ENCODE measurements at regions of chr12 and their contacts with region 1.

Region 1: DNA sequence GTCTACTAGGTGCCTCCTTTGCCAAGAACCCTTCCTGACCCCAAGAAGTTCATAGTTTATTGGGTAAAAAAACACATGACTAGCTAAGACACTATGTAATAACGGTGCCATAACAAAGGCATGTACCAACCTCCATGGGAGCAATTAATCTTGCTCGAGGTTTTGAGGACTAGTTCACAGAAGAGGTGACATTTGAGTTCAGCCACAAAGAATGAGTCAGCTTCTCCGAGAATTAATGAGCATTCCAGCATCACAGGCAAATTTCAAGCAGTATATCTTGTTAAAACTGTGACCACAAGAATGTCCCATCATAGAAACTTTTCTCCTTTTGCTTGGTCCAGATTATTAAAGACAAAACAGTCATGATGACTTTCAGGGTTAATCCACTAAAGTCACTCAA is 113.0 kb upstream of the RAP1B start:
- DNase-seq: peak; percentile 27
- ATAC-seq: peak; percentile 78
- H3K4me3 Mint-ChIP-seq: peak overlapping the region; percentile 53
- H3K27ac Mint-ChIP-seq: peak overlapping the region; percentile 86
- H3K4me1 Mint-ChIP-seq: peaks cover 37% of the 10 kb centered on the region
- H3K27me3 Mint-ChIP-seq: peaks cover 2% of the 10 kb centered on the region

Region 2: DNA sequence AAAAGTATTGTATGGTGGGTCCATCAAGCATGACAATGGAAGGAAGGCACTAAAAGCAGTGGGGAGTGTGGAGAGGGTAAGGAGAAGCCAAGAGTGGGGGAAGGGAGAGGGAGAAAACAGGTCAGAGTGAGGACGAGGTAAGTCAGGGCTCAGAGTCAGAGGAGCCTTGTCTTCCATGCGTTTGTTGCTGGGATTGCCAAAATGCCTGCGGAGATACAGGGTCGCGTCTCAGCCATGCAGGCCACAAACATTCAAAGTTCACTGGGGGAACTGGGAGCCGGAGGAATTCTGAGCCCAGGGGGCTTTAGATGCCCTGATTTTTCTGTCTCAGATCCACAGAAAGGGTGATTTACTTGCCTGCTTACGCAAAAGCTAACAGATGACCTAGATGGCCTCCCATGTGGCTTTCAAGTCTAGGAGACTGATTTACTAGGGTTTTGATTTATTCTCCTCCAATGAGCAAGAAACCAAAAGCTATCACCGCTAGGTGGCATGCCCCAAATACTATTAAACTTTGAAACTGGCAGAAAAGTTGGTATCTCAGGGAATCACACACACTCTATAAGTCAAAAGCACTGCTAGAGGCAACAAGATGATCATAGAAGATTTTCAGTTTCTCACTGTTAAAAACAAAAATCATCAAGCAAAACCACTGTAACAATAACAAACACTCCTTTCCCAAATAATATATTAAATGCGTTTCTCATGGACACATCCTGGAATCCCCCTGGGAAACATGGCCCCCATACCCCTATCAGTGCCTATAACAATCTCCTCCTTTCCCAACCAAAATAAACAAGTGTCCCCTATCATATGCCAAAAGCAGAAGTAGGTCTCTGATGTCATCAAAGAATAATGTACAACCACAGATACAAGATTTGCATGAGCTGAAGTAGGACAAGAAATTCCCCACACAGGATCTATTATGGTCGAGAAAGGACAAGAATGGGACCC is 138.9 kb before region 1 on chr12:
- CTCF ChIA-PET with region 1: interaction called, 3 read pairs
- POLR2A ChIA-PET with region 1: no interaction called
- intact Hi-C with region 1: loop called (anchors 2 kb)
- DNase-seq: peak; percentile 78
- ATAC-seq: peak; percentile 80
- H3K4me3 Mint-ChIP-seq: no peak overlapping the region
- H3K27ac Mint-ChIP-seq: peak overlapping the region; percentile 13
- H3K4me1 Mint-ChIP-seq: peaks cover 29% of the 10 kb centered on the region
- H3K27me3 Mint-ChIP-seq: no peaks in the 10 kb centered on the region

Region 3: DNA sequence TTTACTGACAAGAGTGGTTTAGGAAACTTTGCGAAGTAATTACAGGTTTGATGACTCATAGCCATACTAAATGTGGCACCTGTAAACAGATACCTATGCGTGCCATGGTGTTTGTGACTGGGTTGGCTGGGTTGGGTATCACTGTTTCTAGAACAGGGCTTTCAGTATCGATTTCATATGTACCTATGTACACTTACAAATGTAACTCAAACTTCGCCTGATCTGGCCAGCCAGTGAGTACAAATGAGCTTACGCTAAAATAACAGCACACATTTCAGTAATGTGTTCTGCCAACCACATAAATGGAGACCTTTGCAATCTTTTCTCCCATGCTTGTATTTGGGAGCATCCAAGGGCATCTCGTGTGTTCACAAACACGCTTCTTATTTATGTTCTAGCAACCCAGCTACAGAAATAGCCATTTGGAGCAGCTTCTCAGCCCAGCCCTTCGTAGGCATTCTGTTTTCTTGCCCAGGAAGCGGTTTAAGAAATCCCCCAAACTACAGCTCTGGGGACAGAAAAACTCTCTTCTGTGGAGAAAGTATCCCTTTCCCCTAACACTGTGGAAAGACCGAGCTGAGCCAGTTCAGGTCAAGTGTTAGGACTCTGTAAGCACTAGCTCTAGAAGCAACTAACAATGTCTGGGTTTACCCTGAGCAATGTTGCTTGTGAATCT is 123.3 kb before region 1 on chr12:
- CTCF ChIA-PET with region 1: no interaction called
- POLR2A ChIA-PET with region 1: interaction called, 3 read pairs
- intact Hi-C with region 1: loop called (anchors 1 to 2 kb)
- DNase-seq: peak; percentile 79
- ATAC-seq: peak; percentile 89
- H3K4me3 Mint-ChIP-seq: no peak overlapping the region
- H3K27ac Mint-ChIP-seq: peak overlapping the region; percentile 89
- H3K4me1 Mint-ChIP-seq: peaks cover 48% of the 10 kb centered on the region
- H3K27me3 Mint-ChIP-seq: no peaks in the 10 kb centered on the region

Region 4: DNA sequence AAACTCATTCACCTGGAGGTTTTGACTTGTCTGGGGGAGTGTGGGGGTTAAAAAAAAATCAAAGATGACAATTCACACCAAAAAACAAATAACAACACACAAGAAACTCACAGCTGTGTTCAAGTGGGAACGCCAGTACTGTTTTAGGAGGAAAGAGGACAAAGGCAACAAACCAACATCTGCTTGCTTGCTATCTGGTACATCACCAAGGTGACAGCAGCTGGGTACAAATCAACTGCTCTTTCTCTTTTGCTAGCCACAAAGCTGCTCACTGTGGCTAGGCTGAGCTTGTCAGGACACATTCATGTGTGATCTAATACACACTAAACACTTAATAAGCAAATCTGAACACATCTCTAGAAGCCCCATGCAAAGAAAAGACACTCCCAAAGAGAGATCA is 15.0 kb before region 1 on chr12:
- CTCF ChIA-PET with region 1: interaction called, 6 read pairs
- POLR2A ChIA-PET with region 1: interaction called, 3 read pairs
- intact Hi-C with region 1: loop called (anchors 1 kb)
- DNase-seq: peak; percentile 26
- ATAC-seq: peak; percentile 8
- H3K4me3 Mint-ChIP-seq: no peak overlapping the region
- H3K27ac Mint-ChIP-seq: peak overlapping the region; percentile 66
- H3K4me1 Mint-ChIP-seq: peaks cover 40% of the 10 kb centered on the region
- H3K27me3 Mint-ChIP-seq: no peaks in the 10 kb centered on the region

Region 5: DNA sequence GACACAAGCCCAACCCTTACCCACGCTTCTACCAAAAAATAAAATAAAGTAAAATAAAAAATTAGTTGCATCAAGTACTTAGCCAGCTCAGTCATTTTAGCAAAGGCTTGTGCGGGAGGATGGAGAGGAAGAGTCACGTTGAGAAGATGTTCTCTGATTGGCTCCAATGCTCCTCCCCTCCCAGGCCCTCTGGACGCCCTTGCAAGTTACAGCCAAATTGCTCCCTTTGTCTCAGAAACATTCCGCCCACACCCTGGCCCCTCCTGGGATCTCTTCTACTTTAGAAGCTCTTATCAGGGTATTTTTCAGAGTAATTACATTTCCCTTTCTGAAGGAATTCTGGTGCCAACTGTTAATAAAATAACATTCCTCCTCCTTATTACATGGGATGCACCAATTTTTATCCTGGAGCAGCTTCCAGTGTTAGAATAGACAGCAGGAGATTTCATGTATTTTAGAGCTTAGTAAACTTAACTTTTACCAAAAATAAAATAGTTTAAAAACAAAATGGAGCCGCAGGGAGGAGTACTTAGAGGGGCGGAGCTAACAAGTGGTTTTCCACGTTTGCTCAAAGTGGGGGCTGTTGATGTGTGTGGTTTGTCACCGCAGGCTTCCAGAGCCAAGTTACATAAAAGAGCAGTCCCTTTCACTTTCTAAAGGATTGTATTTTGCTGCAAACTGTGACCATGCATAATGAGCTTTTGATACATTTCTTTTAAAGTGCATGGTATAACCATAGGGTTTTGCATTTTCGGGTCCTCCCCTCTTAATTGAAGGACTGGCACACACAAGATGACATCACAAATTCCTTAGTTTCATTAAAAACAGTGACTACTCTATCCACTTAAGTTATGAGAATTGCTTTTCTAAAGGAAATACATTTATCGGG is 41.3 kb after region 1 on chr12:
- CTCF ChIA-PET with region 1: interaction called, 3 read pairs
- POLR2A ChIA-PET with region 1: no interaction called
- intact Hi-C with region 1: loop called in 1 of 2 experiments (anchors 1 kb)
- DNase-seq: peak; percentile 74
- ATAC-seq: peak; percentile 84
- H3K4me3 Mint-ChIP-seq: peak overlapping the region; percentile 33
- H3K27ac Mint-ChIP-seq: peak overlapping the region; percentile 67
- H3K4me1 Mint-ChIP-seq: peaks cover 45% of the 10 kb centered on the region
- H3K27me3 Mint-ChIP-seq: no peaks in the 10 kb centered on the region

Region 6: GRCh38 chr12:68807576-68808387 is 310.1 kb after region 1 on chr12 and contains the start of gene MDM2:
- CTCF ChIA-PET with region 1: no interaction called
- POLR2A ChIA-PET with region 1: no interaction called
- intact Hi-C with region 1: no loop called
- DNase-seq: peak; percentile 96
- ATAC-seq: peak; percentile 89
- H3K4me3 Mint-ChIP-seq: peak within 1 kb of the TSS; percentile 88
- H3K27ac Mint-ChIP-seq: peak within 1 kb of the TSS; percentile 99
- H3K4me1 Mint-ChIP-seq: peaks cover 34% of the 10 kb centered on the region
- H3K27me3 Mint-ChIP-seq: no peaks in the 10 kb centered on the region
- total RNA-seq, gene MDM2: 114 to 119 TPM